Panc1 (cell line): ENCODE measurements at regions of chr19 and their contacts with region 1.

Region 1: DNA sequence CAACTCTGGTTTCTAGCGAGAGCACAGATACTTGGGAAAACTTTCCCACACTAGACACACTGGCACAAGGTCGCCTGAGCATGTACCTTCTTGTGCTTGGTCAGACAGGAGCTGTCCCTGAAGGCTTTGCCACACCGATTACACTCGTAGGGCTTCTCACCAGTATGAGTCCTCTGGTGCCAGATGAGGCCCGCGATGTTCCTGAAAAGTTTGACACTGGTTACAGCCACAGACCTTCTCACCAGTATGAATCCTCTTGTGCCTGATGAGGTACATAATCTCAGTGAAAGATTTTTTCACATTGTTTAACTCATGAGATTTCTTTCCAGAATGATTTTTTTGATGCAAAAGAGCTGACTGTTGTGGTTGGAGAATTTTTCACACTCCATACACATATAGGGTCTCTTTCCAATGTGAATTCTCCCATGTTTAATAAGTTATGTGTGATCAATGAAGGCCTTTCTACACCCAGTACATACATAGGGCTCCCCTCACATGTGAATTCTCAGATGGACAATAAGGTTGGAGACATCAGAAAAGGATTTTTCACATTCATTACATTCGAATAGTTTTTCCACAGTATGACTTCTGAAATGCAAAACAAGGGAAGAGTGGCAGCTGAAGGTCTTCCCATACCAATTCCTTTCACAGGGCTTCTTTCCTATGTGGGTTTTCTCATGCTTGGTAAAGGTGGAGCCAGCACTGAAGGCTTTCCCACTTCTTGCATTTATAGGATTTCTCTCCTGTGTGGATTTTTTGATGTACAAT is 9.9 kb upstream of the ZSCAN18 start:
- DNase-seq: no peak
- ATAC-seq: no peak
- H3K4me3 ChIP-seq: no peak overlapping the region
- H3K27ac ChIP-seq: no peak overlapping the region
- H3K4me1 ChIP-seq: no peaks in the 10 kb centered on the region
- H3K27me3 ChIP-seq: no peaks in the 10 kb centered on the region
- CTCF ChIP-seq: no peak

Region 2: GRCh38 chr19:58079792-58080191 is 28.2 kb before region 1 on chr19:
- CTCF ChIA-PET with region 1: no interaction called
- POLR2A ChIA-PET with region 1: no interaction called
- in situ Hi-C with region 1: no loop called
- intact Hi-C with region 1: no loop called
- DNase-seq: no peak
- ATAC-seq: no peak
- H3K4me3 ChIP-seq: no peak overlapping the region
- H3K27ac ChIP-seq: no peak overlapping the region
- H3K4me1 ChIP-seq: no peaks in the 10 kb centered on the region
- H3K27me3 ChIP-seq: no peaks in the 10 kb centered on the region
- CTCF ChIP-seq: no peak

Region 3: GRCh38 chr19:58091251-58091995 is 16.5 kb before region 1 on chr19:
- CTCF ChIA-PET with region 1: no interaction called
- POLR2A ChIA-PET with region 1: no interaction called
- in situ Hi-C with region 1: no loop called
- intact Hi-C with region 1: no loop called
- DNase-seq: no peak
- ATAC-seq: 0 out of 2 replicates have a peak, but pooled peaks have one; percentile 27
- H3K4me3 ChIP-seq: no peak overlapping the region
- H3K27ac ChIP-seq: no peak overlapping the region
- H3K4me1 ChIP-seq: no peaks in the 10 kb centered on the region
- H3K27me3 ChIP-seq: no peaks in the 10 kb centered on the region
- CTCF ChIP-seq: no peak

Region 4: GRCh38 chr19:58196901-58197616 is 89.1 kb after region 1 on chr19:
- CTCF ChIA-PET with region 1: no interaction called
- POLR2A ChIA-PET with region 1: interaction called, 26 read pairs
- in situ Hi-C with region 1: no loop called
- intact Hi-C with region 1: no loop called
- DNase-seq: no peak
- ATAC-seq: no peak
- H3K4me3 ChIP-seq: no peak overlapping the region
- H3K27ac ChIP-seq: no peak overlapping the region
- H3K4me1 ChIP-seq: no peaks in the 10 kb centered on the region
- H3K27me3 ChIP-seq: no peaks in the 10 kb centered on the region
- CTCF ChIP-seq: no peak